Motor neuron (in vitro differentiated cells): ENCODE measurements at regions of chr9 and their contacts with region 1.

Region 1: DNA sequence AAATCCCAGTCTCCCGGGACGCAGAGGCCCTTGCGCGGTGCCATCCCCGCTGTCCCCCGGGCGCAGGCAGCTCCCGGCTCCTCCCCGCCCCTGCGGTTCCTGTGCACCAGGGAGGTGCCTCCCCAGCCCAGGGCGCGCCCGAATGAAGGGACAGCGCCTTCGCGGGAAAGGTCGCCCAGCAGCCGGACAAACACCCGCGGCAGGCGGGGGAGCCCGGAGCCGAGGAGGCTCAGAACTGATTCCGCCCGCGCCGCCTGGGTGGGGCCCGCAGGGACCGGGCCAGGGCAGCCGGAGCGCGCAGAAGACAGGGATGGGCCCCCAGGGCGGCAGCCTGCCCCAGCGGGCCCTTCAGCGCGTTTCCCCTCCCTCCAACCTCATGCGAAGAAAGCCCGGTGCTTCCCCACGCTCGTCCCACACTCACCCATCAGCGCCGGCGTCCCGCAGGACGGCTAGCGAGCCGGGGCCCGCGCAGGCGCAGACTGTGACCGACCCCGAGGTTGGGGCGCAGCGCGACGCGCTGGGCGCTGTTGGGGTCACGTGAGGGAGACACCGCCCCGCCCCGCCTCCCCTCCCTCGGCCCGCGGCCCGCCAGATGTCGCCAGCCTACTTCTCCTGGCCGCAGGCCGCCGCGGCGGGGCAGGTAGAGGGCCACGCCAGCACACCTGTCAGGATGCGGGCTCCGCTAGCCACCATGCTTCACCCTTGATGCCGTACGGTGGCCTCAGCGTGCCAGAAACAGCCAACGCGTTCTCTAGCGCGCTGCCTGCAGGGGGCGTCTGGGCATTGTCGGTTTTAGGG is at the start of gene SLC25A51:
- ATAC-seq: peak; percentile 68 to 94 (median 92)
- H3K4me3 ChIP-seq: peak within 1 kb of the TSS; percentile 61 to 98 (median 65)
- H3K27ac ChIP-seq: peak within 1 kb of the TSS; percentile 71 to 81
- H3K4me1 ChIP-seq: peaks cover 9 to 12% of the 10 kb centered on the region in 2 donors
- total RNA-seq, gene SLC25A51: 23.9 to 40.0 (median 29.5) TPM

Region 2: GRCh38 chr9:37592108-37592951 is 311.5 kb before region 1 on chr9 and contains the start of gene TOMM5:
- in situ Hi-C with region 1: loop called in 1 of 9 experiments (anchors 25 kb)
- ATAC-seq: peak; percentile 80 to 98 (median 96)
- H3K4me3 ChIP-seq: peak within 1 kb of the TSS; percentile 83 to 99 (median 92)
- H3K27ac ChIP-seq: peak within 1 kb of the TSS; percentile 96 to 99
- H3K4me1 ChIP-seq: peaks cover 7 to 22% of the 10 kb centered on the region in 2 donors
- total RNA-seq, gene TOMM5: 121 to 314 (median 160) TPM

Region 3: DNA sequence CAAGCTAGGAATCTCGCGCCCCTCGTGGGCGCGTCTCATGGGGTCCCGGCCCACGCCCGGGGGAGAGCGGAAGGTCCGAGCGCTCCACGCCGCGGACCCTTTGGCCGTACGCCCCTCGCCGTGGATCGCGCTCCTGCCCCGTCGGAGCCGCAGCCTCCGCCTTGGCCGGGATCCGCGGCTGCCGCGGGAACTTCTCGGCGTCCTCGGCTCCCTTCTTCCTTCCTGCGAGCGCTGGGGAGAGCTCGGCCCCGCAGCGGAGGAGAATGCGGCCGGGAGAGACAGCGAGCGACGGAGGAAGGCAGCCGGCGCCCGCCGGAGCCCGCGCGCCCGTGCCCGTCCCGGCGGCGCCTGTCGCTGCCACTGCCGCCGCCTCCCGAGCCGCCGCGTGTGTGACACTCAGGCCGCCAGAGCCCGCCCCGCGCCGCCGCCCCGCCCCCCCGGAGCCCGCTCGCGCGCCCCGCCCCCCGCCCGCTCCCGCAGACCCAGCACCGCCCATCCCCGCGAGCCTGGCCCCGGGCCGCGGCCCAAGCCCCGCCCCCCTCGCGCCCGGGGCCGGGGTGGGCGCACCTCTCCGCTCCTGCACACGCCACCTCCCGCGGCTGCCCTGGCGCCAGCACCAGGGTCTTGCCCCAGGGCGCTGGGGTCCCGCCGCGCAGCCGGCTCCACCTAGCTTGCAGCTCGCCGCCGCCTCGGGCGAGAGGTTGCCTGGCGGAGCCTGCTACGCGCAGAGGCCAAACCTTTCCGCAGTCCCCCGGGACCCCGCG is 165.2 kb after region 1 on chr9 and contains the start of gene SHB:
- in situ Hi-C with region 1: loop called in 3 of 9 experiments (anchors 25 kb)
- ATAC-seq: peak; percentile 47 to 80 (median 78)
- H3K4me3 ChIP-seq: peak within 1 kb of the TSS; percentile 58 to 67 (median 60)
- H3K27ac ChIP-seq: peak within 1 kb of the TSS; percentile 84 to 87
- H3K4me1 ChIP-seq: peaks cover 8 to 18% of the 10 kb centered on the region in 2 donors
- total RNA-seq, gene SHB: 2.8 to 12.8 (median 8.7) TPM

Region 4: GRCh38 chr9:38362852-38363593 is 459.2 kb after region 1 on chr9:
- in situ Hi-C with region 1: loop called in 4 of 9 experiments (anchors 10 to 25 kb)
- ATAC-seq: peak; percentile 85 to 94 (median 90)
- H3K4me3 ChIP-seq: no peak overlapping the region
- H3K27ac ChIP-seq: no peak overlapping the region
- H3K4me1 ChIP-seq: peaks cover 26 to 28% of the 10 kb centered on the region in 2 donors